CD4-positive, alpha-beta memory T cell (primary cell): ENCODE measurements at regions of chr19 and their contacts with region 1.

Region 1: DNA sequence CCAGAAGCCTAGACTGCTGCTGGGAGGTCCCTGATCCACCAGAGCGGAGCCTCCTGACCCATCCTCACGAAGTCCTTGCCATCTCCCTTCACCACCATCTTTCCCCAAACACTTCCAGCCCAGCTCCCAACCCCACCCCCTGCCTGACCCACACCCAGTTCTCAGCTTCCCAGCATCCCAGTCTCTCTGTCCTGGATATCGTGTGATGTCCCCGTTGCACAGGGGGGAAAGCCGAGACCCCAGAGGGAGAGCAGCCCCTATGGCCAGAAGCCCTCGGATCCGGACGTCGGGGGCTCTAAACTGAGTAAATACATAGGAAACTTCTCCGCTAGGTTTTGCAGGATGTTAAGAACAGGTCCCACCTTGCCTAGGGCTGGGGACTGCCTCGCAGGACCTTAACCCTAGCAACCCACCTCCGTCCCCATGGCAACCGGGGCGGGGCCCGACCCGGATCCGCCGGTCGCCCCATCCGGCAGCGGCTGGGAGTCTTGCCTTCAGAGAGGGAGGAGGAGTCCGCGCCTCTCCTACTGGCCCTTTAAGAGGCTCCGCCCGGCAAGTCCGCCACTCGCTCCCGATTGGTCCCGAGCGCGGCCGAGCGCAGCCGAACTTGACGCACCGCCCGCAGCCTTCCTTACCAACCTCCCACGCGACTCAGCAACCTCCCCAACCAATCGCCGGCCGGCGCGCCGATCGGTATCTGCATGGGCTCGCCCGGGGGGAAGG is 451 bp upstream of the HMG20B start:
- DNase-seq: peak; percentile 97 to 100 (median 98)
- H3K4me3 ChIP-seq: peak overlapping the region; percentile 57 to 60
- H3K4me3 Mint-ChIP-seq: peak overlapping the region; percentile 75 to 86 (median 78)
- H3K27ac ChIP-seq: peak overlapping the region; percentile 44
- H3K27ac Mint-ChIP-seq: peak overlapping the region; percentile 33 to 92 (median 77)
- H3K4me1 ChIP-seq: peaks cover 15% of the 10 kb centered on the region
- H3K4me1 Mint-ChIP-seq: peaks cover 5 to 23% (median 17%) of the 10 kb centered on the region in 4 donors
- H3K27me3 ChIP-seq: no peaks in the 10 kb centered on the region
- H3K27me3 Mint-ChIP-seq: no peaks in the 10 kb centered on the region

Region 2: GRCh38 chr19:3275583-3276340 is 296.5 kb before region 1 on chr19:
- CTCF ChIA-PET with region 1: no interaction called
- POLR2A ChIA-PET with region 1: no interaction called
- intact Hi-C with region 1: loop called (anchors 5 kb)
- DNase-seq: peak; percentile 90 to 97 (median 92)
- H3K4me3 ChIP-seq: peak overlapping the region; percentile 47 to 78
- H3K4me3 Mint-ChIP-seq: peak overlapping the region; percentile 80 to 93 (median 86)
- H3K27ac ChIP-seq: peak overlapping the region; percentile 23
- H3K27ac Mint-ChIP-seq: peak overlapping the region; percentile 70 to 93 (median 86)
- H3K4me1 ChIP-seq: peaks cover 15% of the 10 kb centered on the region
- H3K4me1 Mint-ChIP-seq: peaks cover 7 to 22% (median 16%) of the 10 kb centered on the region in 4 donors
- H3K27me3 ChIP-seq: no peaks in the 10 kb centered on the region
- H3K27me3 Mint-ChIP-seq: peaks cover 12% of the 10 kb centered on the region in 2 donors

Region 3: DNA sequence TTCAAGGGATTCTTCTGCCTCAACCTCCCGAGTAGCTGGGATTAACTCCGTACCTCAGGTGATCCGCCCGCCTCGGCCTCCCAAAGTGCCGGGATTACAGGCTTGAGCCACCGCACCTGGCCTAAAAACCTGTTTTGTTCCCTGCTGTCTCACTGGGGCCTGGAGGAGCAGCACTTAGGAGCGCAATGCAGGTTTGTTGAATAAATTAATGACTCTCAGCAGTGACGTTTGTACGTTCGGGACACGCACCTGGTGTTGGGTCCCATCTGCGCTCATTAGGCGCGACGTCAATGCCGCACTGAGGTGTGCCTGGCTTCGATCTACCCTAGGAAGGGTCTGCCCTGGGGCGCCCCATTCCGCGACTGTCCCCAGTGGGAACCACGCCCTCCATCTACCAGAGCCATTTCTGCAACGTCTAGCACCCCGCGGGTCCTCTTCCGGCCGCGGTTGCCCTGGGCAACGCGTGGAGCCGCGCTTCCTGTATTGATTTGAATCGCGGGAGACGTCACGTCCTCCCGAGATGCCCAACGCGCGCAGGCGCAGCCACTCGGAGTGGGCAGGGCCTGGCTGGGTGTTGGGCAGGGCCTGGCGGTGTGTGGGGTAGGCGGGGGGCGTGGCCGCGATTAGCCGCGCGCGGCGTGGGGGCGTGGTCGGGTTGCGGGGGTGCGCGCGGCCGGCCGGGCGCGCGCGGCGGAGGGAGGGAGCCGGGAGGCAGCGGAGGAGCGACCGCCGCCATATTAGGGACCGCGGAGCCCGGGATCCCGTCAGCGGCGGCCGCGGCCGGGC is 66.5 kb before region 1 on chr19 and contains the start of gene FZR1:
- CTCF ChIA-PET with region 1: no interaction called
- POLR2A ChIA-PET with region 1: no interaction called
- intact Hi-C with region 1: loop called (anchors 5 kb)
- DNase-seq: peak; percentile 99 to 100 (median 100)
- H3K4me3 ChIP-seq: peak within 1 kb of the TSS; percentile 73 to 77
- H3K4me3 Mint-ChIP-seq: peak within 1 kb of the TSS; percentile 87 to 96 (median 92)
- H3K27ac ChIP-seq: peak within 1 kb of the TSS; percentile 91
- H3K27ac Mint-ChIP-seq: peak within 1 kb of the TSS; percentile 96 to 99 (median 97)
- H3K4me1 ChIP-seq: peaks cover 52% of the 10 kb centered on the region
- H3K4me1 Mint-ChIP-seq: peaks cover 33 to 62% (median 46%) of the 10 kb centered on the region in 4 donors
- H3K27me3 ChIP-seq: no peaks in the 10 kb centered on the region
- H3K27me3 Mint-ChIP-seq: no peaks in the 10 kb centered on the region
- total RNA-seq, gene FZR1: 73.3 to 73.7 TPM

Region 4: GRCh38 chr19:3557461-3558248 is 14.6 kb before region 1 on chr19 and contains the start of gene MFSD12:
- CTCF ChIA-PET with region 1: interaction called, 5 read pairs
- POLR2A ChIA-PET with region 1: interaction called, 54 read pairs
- intact Hi-C with region 1: loop called (anchors 1 kb)
- DNase-seq: peak; percentile 90 to 94 (median 93)
- H3K4me3 ChIP-seq: peak within 1 kb of the TSS; percentile 81 to 84
- H3K4me3 Mint-ChIP-seq: peak within 1 kb of the TSS; percentile 92 to 99 (median 96)
- H3K27ac ChIP-seq: peak within 1 kb of the TSS; percentile 74
- H3K27ac Mint-ChIP-seq: peak within 1 kb of the TSS; percentile 92 to 99 (median 97)
- H3K4me1 ChIP-seq: peaks cover 47% of the 10 kb centered on the region
- H3K4me1 Mint-ChIP-seq: peaks cover 21 to 42% (median 32%) of the 10 kb centered on the region in 4 donors
- H3K27me3 ChIP-seq: no peaks in the 10 kb centered on the region
- H3K27me3 Mint-ChIP-seq: peaks cover 0 to 1% of the 10 kb centered on the region in 2 donors
- total RNA-seq, gene MFSD12: 128 to 136 TPM

Region 5: DNA sequence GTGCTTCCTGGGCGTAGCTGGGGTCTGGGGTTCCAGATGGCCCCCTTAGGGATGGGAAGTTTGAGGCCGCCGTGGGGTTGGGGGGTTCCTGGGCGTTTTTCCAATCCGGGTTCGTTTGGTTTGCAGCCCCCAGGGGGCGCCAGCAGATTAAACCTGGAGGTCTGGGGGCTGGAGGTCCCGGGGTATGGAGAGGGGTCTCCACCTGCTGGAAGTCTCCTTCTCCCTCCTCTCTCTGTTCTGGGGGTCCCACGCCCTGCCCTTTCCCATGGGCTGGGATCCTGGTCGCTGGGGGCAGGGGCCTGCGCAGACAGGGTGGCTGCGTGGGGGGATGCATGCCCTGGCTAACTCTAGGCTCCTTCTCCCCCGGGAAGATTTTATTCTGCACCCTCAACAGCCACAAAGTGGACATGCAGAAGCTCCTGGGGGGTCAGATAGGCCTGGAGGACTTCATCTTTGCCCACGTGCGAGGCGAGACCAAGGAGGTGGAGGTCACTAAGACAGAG is 13.9 kb after region 1 on chr19:
- CTCF ChIA-PET with region 1: interaction called, 10 read pairs
- POLR2A ChIA-PET with region 1: interaction called, 3 read pairs
- intact Hi-C with region 1: no loop called
- DNase-seq: peak in 3 of 5 donors; percentile 21 to 33 (median 29)
- H3K4me3 ChIP-seq: peak overlapping the region in 1 of 2 donors; percentile 38
- H3K4me3 Mint-ChIP-seq: peak overlapping the region in 6 of 8 donors; percentile 29 to 59 (median 46)
- H3K27ac ChIP-seq: no peak overlapping the region
- H3K27ac Mint-ChIP-seq: peak overlapping the region in 1 of 7 donors; percentile 43
- H3K4me1 ChIP-seq: peaks cover 6% of the 10 kb centered on the region
- H3K4me1 Mint-ChIP-seq: no peaks in the 10 kb centered on the region
- H3K27me3 ChIP-seq: no peaks in the 10 kb centered on the region
- H3K27me3 Mint-ChIP-seq: no peaks in the 10 kb centered on the region

Region 6: GRCh38 chr19:3626473-3627350 is 54.4 kb after region 1 on chr19 and contains the start of gene CACTIN:
- CTCF ChIA-PET with region 1: no interaction called
- POLR2A ChIA-PET with region 1: no interaction called
- intact Hi-C with region 1: loop called (anchors 1 kb)
- DNase-seq: peak; percentile 98 to 100 (median 99)
- H3K4me3 ChIP-seq: peak within 1 kb of the TSS; percentile 76 to 79
- H3K4me3 Mint-ChIP-seq: peak within 1 kb of the TSS; percentile 86 to 98 (median 96)
- H3K27ac ChIP-seq: peak within 1 kb of the TSS; percentile 87
- H3K27ac Mint-ChIP-seq: peak within 1 kb of the TSS; percentile 98 to 100 (median 99)
- H3K4me1 ChIP-seq: peaks cover 27% of the 10 kb centered on the region
- H3K4me1 Mint-ChIP-seq: peaks cover 13 to 34% (median 25%) of the 10 kb centered on the region in 4 donors
- H3K27me3 ChIP-seq: no peaks in the 10 kb centered on the region
- H3K27me3 Mint-ChIP-seq: no peaks in the 10 kb centered on the region
- total RNA-seq, gene CACTIN: 44.0 to 50.4 TPM